ENCODE measurements at regions of chr1 and their contacts with region 1.

Region 1: DNA sequence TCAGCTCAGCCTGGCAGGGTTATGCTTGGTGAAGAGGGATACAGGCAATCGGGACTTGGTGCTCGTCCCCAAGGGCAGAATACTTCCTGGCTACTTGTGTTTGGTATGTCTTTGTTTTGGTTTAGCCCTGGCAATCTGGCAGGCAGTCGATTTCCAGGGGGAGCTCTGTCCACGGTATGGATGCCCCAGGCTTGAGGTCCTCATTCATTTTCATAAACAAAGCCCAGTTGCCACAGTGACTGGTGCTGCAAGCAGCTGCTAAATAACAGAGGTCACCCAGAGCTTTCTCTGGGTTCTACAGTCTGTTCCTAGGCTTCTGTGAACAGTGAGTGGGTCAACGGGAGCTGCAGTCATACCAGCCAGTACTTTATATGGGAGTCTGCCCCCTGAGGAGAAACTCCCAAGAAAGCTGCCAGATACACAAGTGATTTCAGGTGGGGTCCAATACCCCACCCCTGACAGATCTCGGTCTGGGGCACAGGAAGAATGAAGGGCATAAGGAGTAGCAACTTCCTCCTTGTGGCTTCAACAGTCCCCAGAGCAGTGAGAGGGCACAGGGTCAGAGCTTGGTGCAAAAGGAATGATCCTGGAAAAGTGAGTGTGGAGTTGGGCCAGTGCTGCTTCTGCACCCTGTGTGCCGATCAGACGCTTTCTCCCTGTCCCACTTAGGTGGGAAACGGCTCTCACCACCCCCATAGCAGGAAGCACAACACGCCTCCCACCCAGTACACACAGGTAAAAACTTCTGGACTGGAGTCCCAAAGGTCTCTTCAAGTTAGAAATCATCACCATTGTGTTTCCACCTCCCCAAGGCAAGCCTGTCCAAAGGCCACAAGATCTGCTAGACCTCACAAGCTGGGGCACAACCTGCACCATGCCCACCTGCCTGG is 55.5 kb downstream of the TGFBR3 start:
- DNase-seq: peak; percentile 81
- H3K4me3 Mint-ChIP-seq: peak overlapping the region; percentile 34
- H3K27ac Mint-ChIP-seq: peak overlapping the region; percentile 87
- H3K4me1 Mint-ChIP-seq: peaks cover 64% of the 10 kb centered on the region
- H3K27me3 Mint-ChIP-seq: no peaks in the 10 kb centered on the region
- CTCF ChIP-seq: peak; percentile 13

Region 2: DNA sequence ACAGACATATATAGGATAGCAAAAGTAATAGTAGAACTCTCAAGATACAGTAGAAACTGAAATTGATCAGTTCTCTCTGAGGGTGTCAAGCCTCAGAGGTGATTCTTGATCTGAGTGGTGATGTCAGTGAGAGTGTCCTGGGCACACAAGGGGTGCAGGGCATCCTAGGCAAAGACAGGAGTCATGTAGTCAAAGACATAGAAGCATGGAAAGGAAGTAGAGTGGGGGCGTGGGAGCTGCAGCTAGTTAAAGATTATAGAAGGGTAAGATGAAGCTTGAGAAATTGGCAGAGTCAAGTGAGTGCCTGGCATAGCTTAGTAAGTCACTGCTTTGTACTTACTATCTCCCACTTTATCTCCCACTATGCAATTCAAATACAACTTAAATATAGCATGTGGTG is 307.0 kb before region 1 on chr1:
- CTCF ChIA-PET with region 1: no interaction called
- intact Hi-C with region 1: loop called (anchors 5 kb)
- DNase-seq: peak; percentile 31
- H3K4me3 Mint-ChIP-seq: no peak overlapping the region
- H3K27ac Mint-ChIP-seq: no peak overlapping the region
- H3K4me1 Mint-ChIP-seq: peaks cover 18% of the 10 kb centered on the region
- H3K27me3 Mint-ChIP-seq: no peaks in the 10 kb centered on the region
- CTCF ChIP-seq: no peak

Region 3: DNA sequence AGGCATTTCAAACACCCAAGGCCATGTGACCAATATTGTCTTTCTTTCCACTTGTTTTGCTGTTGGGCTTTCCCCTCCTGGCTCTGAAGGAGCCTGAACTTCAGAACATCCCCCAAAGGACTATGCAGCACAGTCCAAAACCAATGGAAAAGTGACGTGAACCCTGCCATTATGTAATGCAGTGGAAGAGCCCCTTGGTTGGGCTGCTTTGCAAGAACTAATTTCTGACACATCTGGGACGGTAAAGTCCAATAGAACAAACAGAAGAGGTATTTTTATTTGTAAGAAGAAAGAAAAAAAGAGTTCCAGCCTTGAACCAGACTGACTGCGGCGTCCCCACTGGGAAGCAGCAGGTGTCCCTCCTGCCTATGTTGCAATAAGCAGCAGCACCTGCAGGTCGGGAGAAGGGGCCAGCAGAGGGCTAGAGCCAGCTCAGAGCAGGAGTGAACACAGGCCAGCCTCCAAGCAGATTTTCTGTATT is 213.2 kb before region 1 on chr1:
- CTCF ChIA-PET with region 1: no interaction called
- intact Hi-C with region 1: loop called (anchors 10 kb)
- DNase-seq: peak; percentile 69
- H3K4me3 Mint-ChIP-seq: no peak overlapping the region
- H3K27ac Mint-ChIP-seq: no peak overlapping the region
- H3K4me1 Mint-ChIP-seq: peaks cover 29% of the 10 kb centered on the region
- H3K27me3 Mint-ChIP-seq: no peaks in the 10 kb centered on the region
- CTCF ChIP-seq: no peak

Region 4: DNA sequence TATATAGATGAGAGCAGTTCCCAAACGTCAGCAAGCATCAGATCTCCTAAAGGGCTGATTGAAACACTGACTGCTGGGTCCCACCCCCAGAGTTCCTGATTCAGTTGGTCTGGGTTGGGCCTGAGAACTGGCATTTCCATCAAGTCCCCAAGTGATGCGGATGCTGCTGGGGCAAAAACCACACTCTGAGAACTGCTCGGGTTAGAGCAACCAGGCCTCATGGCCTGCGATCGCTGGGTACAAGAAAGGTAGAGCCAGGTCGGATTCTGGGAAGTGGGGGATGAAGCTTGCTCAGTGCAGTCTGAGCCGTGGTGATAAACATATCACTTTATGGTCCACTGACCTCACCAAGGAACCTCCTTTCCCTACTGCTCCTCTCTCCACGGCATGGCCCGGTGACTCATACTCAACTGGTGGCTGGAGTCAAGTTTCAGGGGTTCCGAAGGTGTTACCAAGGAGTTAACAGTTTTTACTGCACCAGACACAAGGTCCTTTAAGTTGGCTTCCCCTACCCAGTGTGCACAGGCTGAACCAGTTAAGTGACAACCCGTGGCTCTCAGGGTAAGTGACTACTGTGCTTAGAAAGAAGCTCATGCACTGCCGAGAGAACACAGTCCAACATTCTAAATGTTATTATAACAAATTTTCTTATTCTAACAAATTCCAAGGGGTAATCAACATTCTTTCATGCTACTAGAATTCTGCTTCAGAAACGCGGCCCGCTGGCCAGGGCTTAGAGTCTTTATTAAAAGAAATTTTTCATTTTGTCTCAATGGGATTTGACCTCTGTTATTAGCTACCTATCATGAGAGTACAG is 98.0 kb before region 1 on chr1:
- CTCF ChIA-PET with region 1: interaction called, 3 read pairs
- intact Hi-C with region 1: loop called (anchors 1 kb)
- DNase-seq: peak; percentile 79
- H3K4me3 Mint-ChIP-seq: peak overlapping the region; percentile 53
- H3K27ac Mint-ChIP-seq: peak overlapping the region; percentile 76
- H3K4me1 Mint-ChIP-seq: peaks cover 68% of the 10 kb centered on the region
- H3K27me3 Mint-ChIP-seq: no peaks in the 10 kb centered on the region
- CTCF ChIP-seq: no peak

Region 5: GRCh38 chr1:91885716-91886506 is 55.4 kb after region 1 on chr1 and contains the start of gene TGFBR3:
- CTCF ChIA-PET with region 1: interaction called, 8 read pairs
- intact Hi-C with region 1: loop called (anchors 1 kb)
- DNase-seq: peak; percentile 90
- H3K4me3 Mint-ChIP-seq: peak within 1 kb of the TSS; percentile 99
- H3K27ac Mint-ChIP-seq: peak within 1 kb of the TSS; percentile 77
- H3K4me1 Mint-ChIP-seq: peaks cover 40% of the 10 kb centered on the region
- H3K27me3 Mint-ChIP-seq: no peaks in the 10 kb centered on the region
- CTCF ChIP-seq: peak; percentile 37
- total RNA-seq, gene TGFBR3: 7.7 and 10.8 TPM in 2 replicates

Region 6: DNA sequence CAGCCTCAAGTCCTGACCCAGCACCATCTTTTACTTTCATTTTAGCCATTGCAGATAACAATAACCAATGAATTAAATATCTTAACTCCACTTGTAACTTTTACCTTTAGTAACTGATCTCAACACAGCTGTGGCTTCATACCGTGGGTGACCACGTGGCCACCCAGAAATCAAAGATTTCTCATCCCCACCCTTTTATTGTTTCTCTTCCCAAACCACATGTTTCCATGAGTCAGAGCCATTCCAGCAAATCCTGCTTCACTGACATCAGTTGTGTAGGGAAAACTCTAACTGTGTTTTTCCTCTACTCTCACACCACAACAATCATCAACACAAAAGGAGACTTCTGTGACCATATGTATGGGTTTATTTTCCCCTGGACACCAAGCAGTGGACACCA is 93.7 kb after region 1 on chr1:
- CTCF ChIA-PET with region 1: interaction called, 3 read pairs
- intact Hi-C with region 1: loop called (anchors 2 kb)
- DNase-seq: no peak
- H3K4me3 Mint-ChIP-seq: no peak overlapping the region
- H3K27ac Mint-ChIP-seq: peak overlapping the region; percentile 36
- H3K4me1 Mint-ChIP-seq: peaks cover 17% of the 10 kb centered on the region
- H3K27me3 Mint-ChIP-seq: no peaks in the 10 kb centered on the region
- CTCF ChIP-seq: no peak